HepG2 (cell line): ENCODE measurements at regions of chr9 and their contacts with region 1.

Region 1: GRCh38 chr9:75265525-75265972 is 177.2 kb downstream of the OSTF1 start:
- DNase-seq: peak; percentile 30
- ATAC-seq: peak; percentile 72
- H3K4me3 ChIP-seq: no peak overlapping the region
- H3K27ac ChIP-seq: no peak overlapping the region
- H3K4me1 ChIP-seq: no peaks in the 10 kb centered on the region
- H3K27me3 ChIP-seq: no peaks in the 10 kb centered on the region
- CTCF ChIP-seq: peak; percentile 71
- EP300 ChIP-seq: no peak
- POLR2A ChIP-seq: no peak
- RAD21 ChIP-seq: no peak

Region 2: GRCh38 chr9:75504721-75505120 is 239.2 kb after region 1 on chr9:
- CTCF ChIA-PET with region 1: no interaction called
- POLR2A ChIA-PET with region 1: no interaction called
- in situ Hi-C with region 1: no loop called
- intact Hi-C with region 1: no loop called
- DNase-seq: no peak
- ATAC-seq: no peak
- H3K4me3 ChIP-seq: no peak overlapping the region
- H3K27ac ChIP-seq: no peak overlapping the region
- H3K4me1 ChIP-seq: no peaks in the 10 kb centered on the region
- H3K27me3 ChIP-seq: no peaks in the 10 kb centered on the region
- CTCF ChIP-seq: no peak
- EP300 ChIP-seq: no peak
- POLR2A ChIP-seq: no peak
- RAD21 ChIP-seq: no peak

Region 3: GRCh38 chr9:75588809-75589208 is 323.3 kb after region 1 on chr9:
- CTCF ChIA-PET with region 1: no interaction called
- POLR2A ChIA-PET with region 1: no interaction called
- in situ Hi-C with region 1: no loop called
- intact Hi-C with region 1: loop called (anchors 10 kb)
- DNase-seq: no peak
- ATAC-seq: no peak
- H3K4me3 ChIP-seq: no peak overlapping the region
- H3K27ac ChIP-seq: no peak overlapping the region
- H3K4me1 ChIP-seq: no peaks in the 10 kb centered on the region
- H3K27me3 ChIP-seq: no peaks in the 10 kb centered on the region
- CTCF ChIP-seq: no peak
- EP300 ChIP-seq: no peak
- POLR2A ChIP-seq: no peak
- RAD21 ChIP-seq: no peak

Region 4: GRCh38 chr9:75855509-75855908 is 590.0 kb after region 1 on chr9:
- CTCF ChIA-PET with region 1: interaction called, 8 read pairs
- POLR2A ChIA-PET with region 1: no interaction called
- in situ Hi-C with region 1: no loop called
- intact Hi-C with region 1: loop called (anchors 1 kb)
- DNase-seq: peak; percentile 13
- ATAC-seq: peak; percentile 54; the same call in 1 of the 3 replicates
- H3K4me3 ChIP-seq: no peak overlapping the region
- H3K27ac ChIP-seq: no peak overlapping the region
- H3K4me1 ChIP-seq: no peaks in the 10 kb centered on the region
- H3K27me3 ChIP-seq: no peaks in the 10 kb centered on the region
- CTCF ChIP-seq: peak; percentile 53
- EP300 ChIP-seq: no peak
- POLR2A ChIP-seq: no peak
- RAD21 ChIP-seq: no peak

Region 5: GRCh38 chr9:75866273-75866871 is 600.8 kb after region 1 on chr9:
- CTCF ChIA-PET with region 1: interaction called, 4 read pairs
- POLR2A ChIA-PET with region 1: no interaction called
- in situ Hi-C with region 1: no loop called
- intact Hi-C with region 1: loop called (anchors 2 kb)
- DNase-seq: peak; percentile 27
- ATAC-seq: peak; percentile 39; the same call in 2 of the 3 replicates
- H3K4me3 ChIP-seq: no peak overlapping the region
- H3K27ac ChIP-seq: no peak overlapping the region
- H3K4me1 ChIP-seq: no peaks in the 10 kb centered on the region
- H3K27me3 ChIP-seq: no peaks in the 10 kb centered on the region
- CTCF ChIP-seq: peak; percentile 49; the same call in 1 of the 2 replicates
- EP300 ChIP-seq: no peak
- POLR2A ChIP-seq: no peak
- RAD21 ChIP-seq: no peak